ENCODE measurements at regions of chr12 and their contacts with region 1.

Region 1: DNA sequence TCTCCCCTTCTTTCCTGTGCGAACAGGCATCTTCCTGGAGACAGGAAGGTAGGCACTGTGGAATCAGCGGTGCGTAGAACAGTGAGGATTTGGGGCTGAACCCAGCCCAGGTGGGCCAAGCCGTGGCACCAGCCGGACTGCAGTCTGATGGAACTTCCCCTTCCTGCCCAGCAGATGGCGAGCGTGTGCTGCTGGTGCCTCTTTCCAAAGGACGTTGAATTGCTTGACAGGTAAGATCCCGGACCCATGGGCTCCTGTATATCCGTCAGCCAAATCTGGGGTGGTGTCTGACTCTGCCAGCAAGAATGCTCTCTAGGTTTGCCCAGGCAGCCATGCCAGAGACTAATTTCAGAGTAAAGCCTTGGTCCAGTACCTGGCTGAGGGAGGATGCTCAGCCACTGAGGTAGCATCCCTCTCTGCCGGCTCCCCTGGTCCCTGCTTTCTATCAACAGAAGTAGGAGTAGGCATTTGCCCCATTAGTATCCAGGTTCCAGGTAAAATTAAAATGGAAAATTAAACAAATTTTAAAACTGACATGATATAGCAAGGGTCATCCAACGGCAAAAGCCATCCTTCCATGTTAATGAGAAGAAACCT is 21.1 kb upstream of the KCNA5 start:
- DNase-seq: peak in 6 of 9 experiments; percentile 7 to 58 (median 32)
- ATAC-seq: peak; percentile 44
- H3K4me3 ChIP-seq: no peak overlapping the region
- H3K4me3 Mint-ChIP-seq: no peak overlapping the region
- H3K27ac ChIP-seq: no peak overlapping the region
- H3K27ac Mint-ChIP-seq: no peak overlapping the region
- H3K4me1 ChIP-seq: no peaks in the 10 kb centered on the region
- H3K4me1 Mint-ChIP-seq: no peaks in the 10 kb centered on the region
- H3K27me3 ChIP-seq: no peaks in the 10 kb centered on the region
- H3K27me3 Mint-ChIP-seq: peaks cover 26% of the 10 kb centered on the region
- CTCF ChIP-seq: peak; percentile 77

Region 2: GRCh38 chr12:5796171-5796958 is 773.8 kb after region 1 on chr12:
- CTCF ChIA-PET with region 1: no interaction called
- POLR2A ChIA-PET with region 1: no interaction called
- intact Hi-C with region 1: loop called in 1 of 2 experiments (anchors 1 kb)
- DNase-seq: peak in 4 of 9 experiments; percentile 17 to 34 (median 24)
- ATAC-seq: peak; percentile 29
- H3K4me3 ChIP-seq: no peak overlapping the region
- H3K4me3 Mint-ChIP-seq: no peak overlapping the region
- H3K27ac ChIP-seq: no peak overlapping the region
- H3K27ac Mint-ChIP-seq: no peak overlapping the region
- H3K4me1 ChIP-seq: no peaks in the 10 kb centered on the region
- H3K4me1 Mint-ChIP-seq: no peaks in the 10 kb centered on the region
- H3K27me3 ChIP-seq: peaks cover 0 to 2% of the 10 kb centered on the region in 2 experiments
- H3K27me3 Mint-ChIP-seq: peaks cover 4% of the 10 kb centered on the region
- CTCF ChIP-seq: peak; percentile 56

Region 3: GRCh38 chr12:5872735-5873134 is 850.2 kb after region 1 on chr12:
- CTCF ChIA-PET with region 1: no interaction called
- POLR2A ChIA-PET with region 1: no interaction called
- intact Hi-C with region 1: loop called in 1 of 2 experiments (anchors 2 kb)
- DNase-seq: no peak
- ATAC-seq: no peak
- H3K4me3 ChIP-seq: no peak overlapping the region
- H3K4me3 Mint-ChIP-seq: no peak overlapping the region
- H3K27ac ChIP-seq: no peak overlapping the region
- H3K27ac Mint-ChIP-seq: no peak overlapping the region
- H3K4me1 ChIP-seq: no peaks in the 10 kb centered on the region
- H3K4me1 Mint-ChIP-seq: no peaks in the 10 kb centered on the region
- H3K27me3 ChIP-seq: peaks cover 0 to 3% of the 10 kb centered on the region in 2 experiments
- H3K27me3 Mint-ChIP-seq: peaks cover 20% of the 10 kb centered on the region
- CTCF ChIP-seq: no peak